Activated CD4-positive, alpha-beta T cell treated with anti-CD3 and anti-CD28 coated beads for 36 hours (primary cell): ENCODE measurements at regions of chr1 and their contacts with region 1.

Region 1: GRCh38 chr1:15595809-15596617 is 11.2 kb upstream of the AGMAT start:
- DNase-seq: no peak
- ATAC-seq: no peak
- H3K4me3 Mint-ChIP-seq: no peak overlapping the region
- H3K27ac Mint-ChIP-seq: no peak overlapping the region
- H3K4me1 Mint-ChIP-seq: no peaks in the 10 kb centered on the region
- H3K27me3 Mint-ChIP-seq: no peaks in the 10 kb centered on the region

Region 2: GRCh38 chr1:15272009-15272788 is 323.8 kb before region 1 on chr1:
- CTCF ChIA-PET with region 1: no interaction called
- POLR2A ChIA-PET with region 1: no interaction called
- intact Hi-C with region 1: no loop called
- DNase-seq: peak; percentile 71
- ATAC-seq: peak; percentile 95
- H3K4me3 Mint-ChIP-seq: no peak overlapping the region
- H3K27ac Mint-ChIP-seq: no peak overlapping the region
- H3K4me1 Mint-ChIP-seq: peaks cover 5% of the 10 kb centered on the region
- H3K27me3 Mint-ChIP-seq: peaks cover 32% of the 10 kb centered on the region

Region 3: GRCh38 chr1:15610167-15610566 is 14.2 kb after region 1 on chr1:
- CTCF ChIA-PET with region 1: interaction called, 5 read pairs
- POLR2A ChIA-PET with region 1: no interaction called
- intact Hi-C with region 1: loop called in 1 of 2 experiments (anchors 2 kb)
- DNase-seq: no peak
- ATAC-seq: no peak
- H3K4me3 Mint-ChIP-seq: no peak overlapping the region
- H3K27ac Mint-ChIP-seq: no peak overlapping the region
- H3K4me1 Mint-ChIP-seq: no peaks in the 10 kb centered on the region
- H3K27me3 Mint-ChIP-seq: no peaks in the 10 kb centered on the region

Region 4: DNA sequence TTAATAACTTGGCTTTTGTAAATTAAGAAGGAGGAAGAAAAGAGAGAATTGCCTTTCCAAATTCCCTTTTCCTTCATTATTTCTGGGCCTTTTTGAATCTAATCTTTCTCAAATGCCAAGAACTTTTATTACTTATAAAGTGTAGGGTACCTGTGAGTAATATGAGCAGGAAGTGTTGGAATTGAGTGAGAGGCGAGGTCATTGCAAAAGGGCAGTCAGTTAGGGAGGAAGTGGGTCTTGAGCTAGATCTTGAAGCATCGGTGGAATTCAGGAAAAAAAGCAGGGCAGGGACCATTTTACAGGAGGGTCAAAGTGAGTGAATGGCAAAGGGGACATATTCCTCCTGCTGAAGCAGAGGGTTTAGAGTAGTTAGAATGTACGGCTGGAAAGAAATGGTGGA is 44.7 kb after region 1 on chr1:
- CTCF ChIA-PET with region 1: no interaction called
- POLR2A ChIA-PET with region 1: no interaction called
- intact Hi-C with region 1: no loop called
- DNase-seq: no peak
- ATAC-seq: no peak
- H3K4me3 Mint-ChIP-seq: no peak overlapping the region
- H3K27ac Mint-ChIP-seq: peak overlapping the region; percentile 27
- H3K4me1 Mint-ChIP-seq: no peaks in the 10 kb centered on the region
- H3K27me3 Mint-ChIP-seq: no peaks in the 10 kb centered on the region

Region 5: GRCh38 chr1:15741183-15741850 is 145.3 kb after region 1 on chr1:
- CTCF ChIA-PET with region 1: interaction called, 6 read pairs
- POLR2A ChIA-PET with region 1: no interaction called
- intact Hi-C with region 1: loop called (anchors 1 kb)
- DNase-seq: peak; percentile 88
- ATAC-seq: peak; percentile 96
- H3K4me3 Mint-ChIP-seq: no peak overlapping the region
- H3K27ac Mint-ChIP-seq: no peak overlapping the region
- H3K4me1 Mint-ChIP-seq: peaks cover 5% of the 10 kb centered on the region
- H3K27me3 Mint-ChIP-seq: no peaks in the 10 kb centered on the region